Prostate gland (tissue), 2 donors: ENCODE measurements at regions of chr2 and their contacts with region 1.

Region 1: DNA sequence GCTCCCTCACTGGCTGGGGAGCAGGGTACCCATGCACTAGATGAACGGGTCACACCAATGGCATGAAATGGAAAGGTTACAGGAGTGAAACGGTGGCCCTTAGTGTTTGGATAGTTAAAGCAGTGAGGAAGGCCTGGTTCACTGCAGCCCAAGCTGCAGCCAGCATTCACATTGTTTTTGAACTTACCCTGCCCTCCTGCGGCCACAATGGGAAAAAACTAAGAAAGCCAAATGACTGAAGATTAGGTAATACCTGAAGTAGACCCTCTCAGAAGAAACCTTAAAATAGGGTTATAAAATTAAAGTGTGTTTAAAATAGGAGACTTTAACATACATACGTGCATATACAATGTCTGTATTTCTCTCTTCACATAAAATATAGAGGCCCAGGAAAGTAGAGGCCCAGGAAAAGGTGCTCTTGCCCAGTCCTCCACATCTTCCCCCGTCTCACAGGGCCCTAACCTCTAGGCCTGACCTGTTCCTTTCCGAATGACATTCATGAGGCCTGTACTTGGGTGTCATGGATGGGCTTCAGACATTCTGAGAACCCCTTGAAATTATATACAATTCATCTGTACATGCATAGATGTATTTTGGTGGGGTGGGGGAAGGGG is 33.3 kb downstream of the DOK1 start:
- DNase-seq: peak; percentile 63
- H3K4me3 ChIP-seq: no peak overlapping the region
- H3K27ac ChIP-seq: no peak overlapping the region
- H3K4me1 ChIP-seq: no peaks in the 10 kb centered on the region
- H3K27me3 ChIP-seq: no peaks in the 10 kb centered on the region
- CTCF ChIP-seq: peak in 3 of 4 experiments; percentile 21 to 75 (median 70)
- POLR2A ChIP-seq: no peak

Region 2: GRCh38 chr2:74482801-74483674 is 104.7 kb before region 1 on chr2 and contains the starts of genes CCDC142 and TTC31:
- intact Hi-C with region 1: loop called (anchors 2 kb)
- DNase-seq: peak; percentile 96
- H3K4me3 ChIP-seq: peak within 1 kb of the TSS; percentile 74 to 84
- H3K27ac ChIP-seq: peak within 1 kb of the TSS; percentile 83 to 90
- H3K4me1 ChIP-seq: peaks cover 13% of the 10 kb centered on the region
- H3K27me3 ChIP-seq: no peaks in the 10 kb centered on the region
- CTCF ChIP-seq: peak; percentile 61 to 94 (median 90)
- POLR2A ChIP-seq: peak; percentile 26
- total RNA-seq, gene CCDC142: 28.0 to 28.3 TPM
- total RNA-seq, gene TTC31: 24.0 to 27.6 TPM

Region 3: GRCh38 chr2:74529357-74530238 is 58.2 kb before region 1 on chr2 and contains the starts of genes AUP1 and HTRA2:
- intact Hi-C with region 1: loop called (anchors 10 kb)
- DNase-seq: peak; percentile 99
- H3K4me3 ChIP-seq: peak within 1 kb of the TSS; percentile 63 to 89
- H3K27ac ChIP-seq: peak within 1 kb of the TSS; percentile 67 to 82
- H3K4me1 ChIP-seq: peaks cover 7% of the 10 kb centered on the region
- H3K27me3 ChIP-seq: no peaks in the 10 kb centered on the region
- CTCF ChIP-seq: peak in 2 of 4 experiments; percentile 30 to 31
- POLR2A ChIP-seq: peak; percentile 47
- total RNA-seq, gene AUP1: 101 to 124 TPM
- total RNA-seq, gene HTRA2: 19.1 to 37.9 TPM